ENCODE measurements at regions of chr20 and their contacts with region 1.

Region 1: GRCh38 chr20:22974353-22974752 is 60.8 kb upstream of the SSTR4 start:
- H3K4me3 ChIP-seq: no peak overlapping the region
- H3K27ac ChIP-seq: no peak overlapping the region
- H3K4me1 ChIP-seq: no peaks in the 10 kb centered on the region
- CTCF ChIP-seq: no peak

Region 2: GRCh38 chr20:22846863-22847262 is 127.5 kb before region 1 on chr20:
- CTCF ChIA-PET with region 1: interaction called, 17 read pairs
- POLR2A ChIA-PET with region 1: no interaction called
- H3K4me3 ChIP-seq: no peak overlapping the region
- H3K27ac ChIP-seq: no peak overlapping the region
- H3K4me1 ChIP-seq: peaks cover 4% of the 10 kb centered on the region; the same call in 1 of the 2 replicates
- CTCF ChIP-seq: no peak

Region 3: GRCh38 chr20:22954661-22955060 is 19.7 kb before region 1 on chr20:
- CTCF ChIA-PET with region 1: interaction called, 11 read pairs
- POLR2A ChIA-PET with region 1: no interaction called
- H3K4me3 ChIP-seq: no peak overlapping the region
- H3K27ac ChIP-seq: no peak overlapping the region
- H3K4me1 ChIP-seq: no peaks in the 10 kb centered on the region
- CTCF ChIP-seq: no peak

Region 4: DNA sequence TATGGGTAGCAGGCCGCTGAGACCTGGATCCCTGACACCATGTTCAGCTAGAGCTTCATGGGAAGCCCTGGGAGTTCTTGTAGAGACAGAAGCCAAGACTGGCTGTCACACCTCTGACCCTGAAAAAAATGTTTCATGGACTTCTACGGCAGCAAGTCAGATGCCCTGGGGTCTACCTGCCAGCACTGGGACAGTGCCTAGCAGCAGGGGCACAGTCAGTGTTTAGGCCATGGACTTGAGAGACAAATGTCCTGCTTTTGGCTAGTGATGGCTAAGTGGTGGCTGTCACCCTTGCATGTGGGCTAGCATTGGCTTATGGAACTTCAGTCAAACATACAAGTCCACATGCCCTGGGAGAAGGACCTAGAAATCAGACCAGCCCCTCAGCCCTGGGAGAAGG is 19.5 kb after region 1 on chr20:
- CTCF ChIA-PET with region 1: no interaction called
- POLR2A ChIA-PET with region 1: no interaction called
- H3K4me3 ChIP-seq: no peak overlapping the region
- H3K27ac ChIP-seq: no peak overlapping the region
- H3K4me1 ChIP-seq: no peaks in the 10 kb centered on the region
- CTCF ChIP-seq: no peak

Region 5: DNA sequence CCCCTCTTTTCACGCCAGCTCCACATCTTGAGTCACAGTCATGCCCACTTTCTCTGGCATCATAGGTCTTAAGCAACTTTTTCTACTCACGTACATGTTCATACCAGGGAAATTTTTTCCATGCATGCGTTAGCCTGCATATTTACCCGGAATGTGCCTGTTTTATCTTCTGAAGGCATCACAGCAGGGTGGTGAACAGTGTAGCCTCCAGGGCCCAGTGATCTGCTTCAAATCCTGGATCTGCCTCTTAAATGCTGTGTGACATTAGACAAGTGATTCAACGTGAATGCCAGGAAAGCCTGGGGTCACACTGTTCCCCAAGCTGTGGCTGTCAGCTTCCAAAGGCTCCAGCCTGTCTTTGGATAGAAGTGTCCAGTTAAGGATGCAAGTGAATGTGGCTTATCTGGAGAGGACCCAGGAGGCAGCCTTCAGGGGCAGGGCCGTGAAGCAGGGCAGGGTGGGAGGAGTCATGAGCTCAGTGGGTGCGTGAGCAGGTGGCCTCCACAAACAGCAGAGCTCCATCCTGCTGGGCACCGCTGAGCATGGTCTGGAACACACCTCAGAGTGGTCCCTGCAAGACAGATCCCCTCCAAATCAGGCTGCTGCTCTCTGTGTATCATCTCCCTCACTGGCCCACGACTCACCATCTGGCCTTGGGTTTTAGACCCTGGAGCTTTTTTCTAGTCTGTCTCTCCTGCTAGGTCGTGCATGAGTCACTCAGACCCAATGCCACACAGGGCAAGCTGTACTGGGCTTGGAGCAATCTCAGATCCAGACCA is 142.1 kb after region 1 on chr20:
- CTCF ChIA-PET with region 1: no interaction called
- POLR2A ChIA-PET with region 1: no interaction called
- H3K4me3 ChIP-seq: no peak overlapping the region
- H3K27ac ChIP-seq: no peak overlapping the region
- H3K4me1 ChIP-seq: no peaks in the 10 kb centered on the region
- CTCF ChIP-seq: no peak